Esophagus muscularis mucosa (tissue), 4 donors: ENCODE measurements at regions of chr7 and their contacts with region 1.

Region 1: DNA sequence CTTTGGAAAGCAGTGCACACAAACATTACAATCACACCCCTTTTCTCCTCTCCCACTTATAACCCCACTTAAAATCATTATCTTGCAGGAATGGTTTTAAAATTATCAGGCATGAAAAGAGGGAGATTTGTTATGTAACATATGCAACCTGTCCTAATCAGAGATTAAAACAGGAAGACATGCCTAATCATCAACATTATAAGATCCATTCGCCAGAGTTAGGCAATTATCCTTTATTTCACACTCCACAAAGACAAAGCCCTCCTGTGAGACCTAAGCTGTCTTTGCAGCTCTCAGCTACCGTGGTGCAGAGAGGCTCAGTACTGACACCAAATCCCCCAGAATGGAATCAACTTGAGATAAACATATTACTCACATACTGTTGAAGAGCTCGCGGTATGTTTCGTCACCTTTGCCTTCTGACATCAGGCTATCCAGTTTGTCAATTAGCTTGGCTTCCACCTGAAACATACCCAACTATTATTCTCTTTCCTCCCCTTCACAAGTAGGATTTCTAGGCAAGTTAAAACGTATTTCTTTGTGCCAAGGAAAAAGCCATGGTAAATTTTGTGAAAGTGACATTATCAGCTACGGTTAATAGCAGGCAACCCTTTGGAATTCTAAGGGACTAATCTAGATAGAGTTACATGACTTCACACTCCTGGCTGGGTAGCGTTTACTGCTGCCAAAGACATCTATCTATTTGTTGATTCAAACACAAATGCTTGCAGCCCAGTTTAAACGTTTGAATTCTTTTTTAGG is 226.2 kb upstream of the IMMP2L start:
- DNase-seq: no peak
- H3K4me3 ChIP-seq: no peak overlapping the region
- H3K27ac ChIP-seq: no peak overlapping the region
- H3K4me1 ChIP-seq: no peaks in the 10 kb centered on the region
- H3K27me3 ChIP-seq: no peaks in the 10 kb centered on the region
- CTCF ChIP-seq: no peak
- EP300 ChIP-seq: no peak
- POLR2A ChIP-seq: no peak

Region 2: GRCh38 chr7:111752022-111752582 is 36.4 kb before region 1 on chr7:
- intact Hi-C with region 1: loop called (anchors 2 kb)
- DNase-seq: no peak
- H3K4me3 ChIP-seq: no peak overlapping the region
- H3K27ac ChIP-seq: no peak overlapping the region
- H3K4me1 ChIP-seq: no peaks in the 10 kb centered on the region
- H3K27me3 ChIP-seq: no peaks in the 10 kb centered on the region
- CTCF ChIP-seq: peak; percentile 45 to 72 (median 53)
- EP300 ChIP-seq: no peak
- POLR2A ChIP-seq: no peak

Region 3: GRCh38 chr7:111914261-111914660 is 125.8 kb after region 1 on chr7:
- intact Hi-C with region 1: no loop called
- DNase-seq: no peak
- H3K4me3 ChIP-seq: no peak overlapping the region
- H3K27ac ChIP-seq: no peak overlapping the region
- H3K4me1 ChIP-seq: peaks cover 0 to 7% (median 0%) of the 10 kb centered on the region in 4 donors
- H3K27me3 ChIP-seq: no peaks in the 10 kb centered on the region
- CTCF ChIP-seq: no peak
- EP300 ChIP-seq: no peak
- POLR2A ChIP-seq: no peak

Region 4: GRCh38 chr7:111931016-111931517 is 142.6 kb after region 1 on chr7:
- intact Hi-C with region 1: loop called (anchors 10 kb)
- DNase-seq: no peak
- H3K4me3 ChIP-seq: no peak overlapping the region
- H3K27ac ChIP-seq: peak overlapping the region in 1 of 4 donors; percentile 33
- H3K4me1 ChIP-seq: peaks cover 0 to 12% (median 0%) of the 10 kb centered on the region in 4 donors
- H3K27me3 ChIP-seq: no peaks in the 10 kb centered on the region
- CTCF ChIP-seq: no peak
- EP300 ChIP-seq: no peak
- POLR2A ChIP-seq: no peak